ENCODE measurements at regions of chr10 and their contacts with region 1.

Region 1: DNA sequence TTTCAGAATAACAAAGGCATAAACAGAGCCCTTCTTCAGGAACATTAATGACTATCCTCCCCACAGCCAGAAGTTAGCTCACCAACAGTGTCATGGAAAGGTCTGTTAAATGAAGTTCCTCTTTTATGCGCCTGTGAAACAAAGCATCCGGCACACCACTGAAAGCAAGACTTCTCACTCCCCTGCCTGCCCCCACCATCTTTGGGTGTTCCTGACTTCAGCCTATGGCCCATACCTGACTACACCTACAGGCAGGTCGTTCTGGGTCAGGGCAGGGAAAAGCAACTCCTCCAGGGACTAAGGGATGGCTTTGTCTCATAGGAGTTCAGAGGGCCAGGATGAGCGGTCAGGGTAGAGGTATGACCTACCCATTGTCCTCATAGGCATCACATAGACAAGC is 205.4 kb downstream of the FANK1 start:
- DNase-seq: peak; percentile 21
- ATAC-seq: peak; percentile 93
- H3K4me3 Mint-ChIP-seq: no peak overlapping the region
- H3K27ac Mint-ChIP-seq: peak overlapping the region; percentile 65
- H3K4me1 Mint-ChIP-seq: peaks cover 21% of the 10 kb centered on the region
- H3K27me3 Mint-ChIP-seq: no peaks in the 10 kb centered on the region
- CTCF ChIP-seq: no peak

Region 2: DNA sequence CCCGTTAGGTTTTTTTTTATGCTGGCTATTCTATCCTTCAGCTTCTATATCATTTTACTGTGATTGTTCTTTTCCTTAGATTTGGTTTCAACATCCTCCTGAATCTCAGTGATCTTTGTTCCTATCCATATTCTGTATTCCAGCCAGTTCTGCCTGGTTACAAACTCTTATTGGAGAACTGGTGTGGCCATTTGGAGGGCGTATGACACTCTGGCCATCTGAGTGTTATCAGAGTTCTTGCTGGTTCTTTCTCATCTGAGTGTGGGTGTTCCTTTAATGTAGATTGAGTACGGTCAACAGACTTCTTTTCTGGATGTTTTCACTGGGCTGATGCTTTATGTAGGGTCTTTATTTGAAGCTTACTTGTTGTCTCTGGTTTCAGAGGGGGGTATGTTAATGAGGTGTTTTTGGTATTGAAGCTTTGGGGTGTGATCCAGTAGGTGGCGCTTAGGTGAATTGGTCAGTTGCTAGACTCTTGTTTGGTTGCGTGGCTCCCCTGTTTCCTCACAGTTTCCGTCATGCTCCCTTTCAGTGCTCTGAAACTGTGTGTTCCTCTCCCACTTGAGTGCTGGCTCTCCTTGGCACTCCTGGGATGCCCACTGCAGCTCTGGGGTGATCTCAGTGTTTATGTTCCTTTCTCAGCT is 124.7 kb before region 1 on chr10:
- CTCF ChIA-PET with region 1: interaction called, 57 read pairs
- POLR2A ChIA-PET with region 1: no interaction called
- intact Hi-C with region 1: loop called (anchors 1 kb)
- DNase-seq: no peak
- ATAC-seq: no peak
- H3K4me3 Mint-ChIP-seq: no peak overlapping the region
- H3K27ac Mint-ChIP-seq: no peak overlapping the region
- H3K4me1 Mint-ChIP-seq: peaks cover 2% of the 10 kb centered on the region
- H3K27me3 Mint-ChIP-seq: peaks cover 10% of the 10 kb centered on the region
- CTCF ChIP-seq: no peak

Region 3: DNA sequence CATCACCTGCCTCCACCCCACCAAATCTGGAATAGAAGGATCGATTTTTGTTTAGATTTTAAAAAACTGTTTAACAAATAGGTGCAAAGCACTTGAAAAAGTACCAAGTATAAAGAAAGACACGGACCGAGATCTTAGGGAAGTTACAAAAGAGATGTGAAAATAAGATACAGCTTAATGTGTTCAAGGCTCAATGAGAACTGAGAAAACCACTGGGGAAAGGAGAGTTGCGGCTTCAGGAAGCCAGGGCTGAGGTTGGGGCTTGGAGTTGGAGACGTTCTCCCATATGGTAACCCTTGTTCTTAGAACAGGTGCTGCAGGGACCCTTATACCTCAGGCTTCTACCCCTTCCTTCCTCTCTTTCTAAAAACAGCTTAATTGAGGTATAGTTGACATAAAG is 65.3 kb before region 1 on chr10:
- CTCF ChIA-PET with region 1: interaction called, 3 read pairs
- POLR2A ChIA-PET with region 1: interaction called, 10 read pairs
- intact Hi-C with region 1: loop called (anchors 1 kb)
- DNase-seq: no peak
- ATAC-seq: peak; percentile 60
- H3K4me3 Mint-ChIP-seq: peak overlapping the region; percentile 47
- H3K27ac Mint-ChIP-seq: peak overlapping the region; percentile 100
- H3K4me1 Mint-ChIP-seq: peaks cover 60% of the 10 kb centered on the region
- H3K27me3 Mint-ChIP-seq: no peaks in the 10 kb centered on the region
- CTCF ChIP-seq: no peak

Region 4: GRCh38 chr10:126148227-126148587 is 46.4 kb after region 1 on chr10:
- CTCF ChIA-PET with region 1: no interaction called
- POLR2A ChIA-PET with region 1: no interaction called
- intact Hi-C with region 1: no loop called
- DNase-seq: no peak
- ATAC-seq: no peak
- H3K4me3 Mint-ChIP-seq: no peak overlapping the region
- H3K27ac Mint-ChIP-seq: no peak overlapping the region
- H3K4me1 Mint-ChIP-seq: no peaks in the 10 kb centered on the region
- H3K27me3 Mint-ChIP-seq: no peaks in the 10 kb centered on the region
- CTCF ChIP-seq: no peak

Region 5: GRCh38 chr10:126179637-126180036 is 77.8 kb after region 1 on chr10:
- CTCF ChIA-PET with region 1: no interaction called
- POLR2A ChIA-PET with region 1: no interaction called
- intact Hi-C with region 1: loop called (anchors 5 kb)
- DNase-seq: no peak
- ATAC-seq: peak; percentile 86
- H3K4me3 Mint-ChIP-seq: peak overlapping the region; percentile 41
- H3K27ac Mint-ChIP-seq: peak overlapping the region; percentile 50
- H3K4me1 Mint-ChIP-seq: peaks cover 18% of the 10 kb centered on the region
- H3K27me3 Mint-ChIP-seq: peaks cover 2% of the 10 kb centered on the region
- CTCF ChIP-seq: no peak